CD4-positive, alpha-beta T cell (primary cell): ENCODE measurements at regions of chr7 and their contacts with region 1.

Region 1: DNA sequence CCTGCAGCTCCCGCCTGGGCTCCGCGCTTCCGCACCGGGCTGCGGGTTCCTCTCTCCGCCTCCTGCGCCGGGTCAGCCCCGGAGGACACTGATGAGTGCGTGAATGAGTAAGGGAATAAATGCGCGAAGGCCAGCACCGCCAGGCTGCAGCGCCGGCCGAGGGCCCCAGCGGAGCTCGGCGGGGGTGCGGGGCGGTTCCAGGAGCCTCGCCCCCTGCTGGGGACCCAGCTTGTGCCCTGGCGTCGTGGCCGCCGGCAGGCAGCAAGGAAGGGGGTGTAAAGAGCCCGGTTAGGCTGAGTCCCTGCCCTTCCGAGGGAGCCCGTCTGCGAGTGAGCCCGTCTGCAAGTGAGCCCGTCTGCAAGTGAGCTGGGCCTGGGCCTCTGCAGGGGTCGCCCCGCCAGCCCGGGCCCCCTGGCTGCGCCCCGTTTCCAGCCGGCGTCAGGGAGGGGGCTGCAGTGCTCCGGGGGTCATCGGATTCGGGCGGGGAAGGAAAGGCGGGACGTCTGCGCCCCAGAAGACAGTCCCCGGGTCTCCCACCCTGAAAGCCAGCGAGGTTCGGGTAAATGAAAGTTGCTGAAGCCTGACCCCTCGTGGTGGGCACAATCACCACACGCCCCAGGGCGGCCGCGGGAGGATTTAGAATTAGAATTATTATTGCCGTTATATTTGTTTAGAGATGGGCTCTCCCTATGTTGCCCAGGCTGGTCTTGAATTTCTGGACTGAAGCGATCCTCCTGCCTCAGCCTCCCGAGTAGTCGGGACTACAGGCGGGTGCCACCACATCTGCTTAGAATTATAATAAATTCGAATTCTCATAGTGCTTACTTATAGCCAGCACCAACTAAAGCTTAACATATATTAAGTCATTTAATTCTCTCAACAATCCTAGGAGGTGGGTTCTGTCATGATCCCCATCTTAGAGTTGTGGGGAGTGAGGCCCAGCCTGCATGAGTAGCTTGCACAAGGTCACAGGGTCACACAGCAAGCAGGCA is 8.6 kb upstream of the CRYGN start:
- DNase-seq: peak; percentile 67 to 87 (median 74)
- ATAC-seq: peak; percentile 89
- H3K4me3 ChIP-seq: peak overlapping the region; percentile 60
- H3K4me3 Mint-ChIP-seq: peak overlapping the region; percentile 90
- H3K27ac ChIP-seq: no peak overlapping the region
- H3K27ac Mint-ChIP-seq: peak overlapping the region; percentile 80
- H3K4me1 ChIP-seq: peaks cover 19% of the 10 kb centered on the region
- H3K4me1 Mint-ChIP-seq: peaks cover 18% of the 10 kb centered on the region
- H3K27me3 ChIP-seq: no peaks in the 10 kb centered on the region
- H3K27me3 Mint-ChIP-seq: peaks cover 4% of the 10 kb centered on the region
- CTCF ChIP-seq: peak; percentile 73

Region 2: DNA sequence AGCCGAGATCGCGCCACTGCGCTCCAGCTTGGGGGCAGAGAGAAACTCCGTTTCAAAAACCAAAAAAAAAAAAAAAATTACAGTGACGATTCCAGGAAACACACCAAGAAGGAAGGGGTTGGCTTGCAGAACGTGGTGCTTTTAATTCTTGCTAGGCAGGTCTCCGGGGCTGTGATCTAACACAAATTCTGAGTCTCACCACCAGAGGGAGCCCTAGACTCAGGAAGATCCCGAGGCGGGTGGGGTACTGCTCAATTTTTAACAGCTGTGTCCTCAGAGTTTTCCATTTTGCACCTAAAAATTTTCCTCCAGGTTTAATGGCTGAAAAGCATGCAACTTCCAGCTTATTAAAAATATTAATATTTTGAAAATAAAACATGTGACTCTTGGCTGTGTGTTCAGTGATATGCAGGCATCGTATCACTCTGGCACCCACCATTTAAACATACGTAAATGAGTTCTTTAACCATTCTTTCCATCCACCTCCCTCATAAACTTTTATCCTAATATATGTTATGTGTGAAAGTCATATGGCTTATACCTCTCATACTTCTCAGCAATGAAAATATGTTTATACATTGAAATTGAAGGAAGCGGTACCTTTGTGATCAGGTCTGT is 133.4 kb before region 1 on chr7:
- CTCF ChIA-PET with region 1: interaction called, 37 read pairs
- POLR2A ChIA-PET with region 1: interaction called, 7 read pairs
- intact Hi-C with region 1: loop called (anchors 1 kb)
- DNase-seq: peak; percentile 60 to 90 (median 74)
- ATAC-seq: peak; percentile 95
- H3K4me3 ChIP-seq: no peak overlapping the region
- H3K4me3 Mint-ChIP-seq: no peak overlapping the region
- H3K27ac ChIP-seq: no peak overlapping the region
- H3K27ac Mint-ChIP-seq: no peak overlapping the region
- H3K4me1 ChIP-seq: peaks cover 9% of the 10 kb centered on the region
- H3K4me1 Mint-ChIP-seq: peaks cover 9% of the 10 kb centered on the region
- H3K27me3 ChIP-seq: no peaks in the 10 kb centered on the region
- H3K27me3 Mint-ChIP-seq: no peaks in the 10 kb centered on the region
- CTCF ChIP-seq: peak; percentile 93

Region 3: GRCh38 chr7:151368136-151368571 is 80.4 kb before region 1 on chr7:
- CTCF ChIA-PET with region 1: interaction called, 42 read pairs
- POLR2A ChIA-PET with region 1: interaction called, 33 read pairs
- intact Hi-C with region 1: loop called (anchors 1 kb)
- DNase-seq: peak; percentile 59 to 88 (median 68)
- ATAC-seq: peak; percentile 97
- H3K4me3 ChIP-seq: no peak overlapping the region
- H3K4me3 Mint-ChIP-seq: no peak overlapping the region
- H3K27ac ChIP-seq: no peak overlapping the region
- H3K27ac Mint-ChIP-seq: peak overlapping the region; percentile 25
- H3K4me1 ChIP-seq: peaks cover 8% of the 10 kb centered on the region
- H3K4me1 Mint-ChIP-seq: peaks cover 6% of the 10 kb centered on the region
- H3K27me3 ChIP-seq: no peaks in the 10 kb centered on the region
- H3K27me3 Mint-ChIP-seq: no peaks in the 10 kb centered on the region
- CTCF ChIP-seq: peak; percentile 96

Region 4: GRCh38 chr7:151432791-151433521 is 15.6 kb before region 1 on chr7:
- CTCF ChIA-PET with region 1: interaction called, 16 read pairs
- POLR2A ChIA-PET with region 1: interaction called, 25 read pairs
- intact Hi-C with region 1: loop called (anchors 1 to 2 kb)
- DNase-seq: peak in 12 of 14 experiments; percentile 29 to 82 (median 51)
- ATAC-seq: peak; percentile 51
- H3K4me3 ChIP-seq: peak overlapping the region; percentile 14
- H3K4me3 Mint-ChIP-seq: peak overlapping the region; percentile 35
- H3K27ac ChIP-seq: peak overlapping the region; percentile 24 to 67
- H3K27ac Mint-ChIP-seq: peak overlapping the region; percentile 88
- H3K4me1 ChIP-seq: peaks cover 66% of the 10 kb centered on the region
- H3K4me1 Mint-ChIP-seq: peaks cover 60% of the 10 kb centered on the region
- H3K27me3 ChIP-seq: no peaks in the 10 kb centered on the region
- H3K27me3 Mint-ChIP-seq: no peaks in the 10 kb centered on the region
- CTCF ChIP-seq: peak; percentile 58

Region 5: GRCh38 chr7:151759591-151760042 is 311.1 kb after region 1 on chr7:
- CTCF ChIA-PET with region 1: no interaction called
- POLR2A ChIA-PET with region 1: no interaction called
- intact Hi-C with region 1: loop called in 1 of 2 experiments (anchors 5 kb)
- DNase-seq: peak; percentile 31 to 79 (median 47)
- ATAC-seq: peak; percentile 46
- H3K4me3 ChIP-seq: no peak overlapping the region
- H3K4me3 Mint-ChIP-seq: no peak overlapping the region
- H3K27ac ChIP-seq: no peak overlapping the region
- H3K27ac Mint-ChIP-seq: peak overlapping the region; percentile 67
- H3K4me1 ChIP-seq: peaks cover 35% of the 10 kb centered on the region
- H3K4me1 Mint-ChIP-seq: peaks cover 40% of the 10 kb centered on the region
- H3K27me3 ChIP-seq: no peaks in the 10 kb centered on the region
- H3K27me3 Mint-ChIP-seq: no peaks in the 10 kb centered on the region
- CTCF ChIP-seq: peak; percentile 97